Adrenal gland (tissue), 19 donors: ENCODE measurements at regions of chr17 and their contacts with region 1.

Region 1: DNA sequence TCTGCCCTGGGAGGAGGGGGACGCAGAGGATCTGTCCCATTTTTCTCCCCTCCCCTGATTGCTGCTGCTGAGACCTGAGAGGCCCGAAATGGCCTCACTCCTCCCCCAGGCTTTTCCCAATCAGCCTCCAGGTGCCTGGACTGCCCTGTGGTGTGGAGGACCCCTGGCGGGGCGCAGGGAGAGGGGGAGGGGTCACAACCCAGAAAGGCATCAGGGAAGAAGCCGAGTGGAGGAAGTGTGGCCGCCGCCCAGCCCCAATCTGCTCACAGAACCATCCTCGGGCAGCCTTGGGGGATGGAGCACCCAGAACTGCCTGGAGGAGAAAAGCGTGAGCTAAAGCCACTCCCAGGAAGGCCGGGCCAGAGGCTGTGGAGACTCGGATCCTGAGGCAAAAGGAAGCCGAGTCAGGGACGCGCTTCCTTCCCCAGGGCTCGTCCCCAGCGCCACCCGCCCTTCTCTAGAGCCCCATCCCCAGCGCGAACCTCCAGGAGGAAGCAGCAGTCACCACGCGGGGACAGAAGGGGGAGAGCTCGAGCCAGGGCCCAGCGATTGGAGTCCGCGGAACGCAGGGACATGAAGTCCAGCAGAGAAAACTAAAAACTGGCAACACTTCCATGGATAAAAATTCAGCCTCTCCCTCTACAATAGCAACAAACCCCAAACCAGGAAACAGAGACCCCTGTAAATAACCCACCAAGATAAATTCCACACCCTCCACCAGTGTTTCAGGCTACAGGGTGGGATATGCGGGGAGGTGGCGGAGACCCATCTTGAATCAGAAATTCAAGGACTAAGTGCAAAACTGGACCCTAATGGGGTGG is 116.3 kb upstream of the METRNL start:
- DNase-seq: peak; percentile 61 to 88 (median 76)
- H3K4me3 ChIP-seq: no peak overlapping the region
- H3K27ac ChIP-seq: peak overlapping the region in 2 of 5 donors; percentile 50 to 63
- H3K4me1 ChIP-seq: peaks cover 0 to 4% of the 10 kb centered on the region in 2 donors
- H3K27me3 ChIP-seq: no peaks in the 10 kb centered on the region
- CTCF ChIP-seq: peak; percentile 18 to 79 (median 68)
- POLR2A ChIP-seq: no peak

Region 2: DNA sequence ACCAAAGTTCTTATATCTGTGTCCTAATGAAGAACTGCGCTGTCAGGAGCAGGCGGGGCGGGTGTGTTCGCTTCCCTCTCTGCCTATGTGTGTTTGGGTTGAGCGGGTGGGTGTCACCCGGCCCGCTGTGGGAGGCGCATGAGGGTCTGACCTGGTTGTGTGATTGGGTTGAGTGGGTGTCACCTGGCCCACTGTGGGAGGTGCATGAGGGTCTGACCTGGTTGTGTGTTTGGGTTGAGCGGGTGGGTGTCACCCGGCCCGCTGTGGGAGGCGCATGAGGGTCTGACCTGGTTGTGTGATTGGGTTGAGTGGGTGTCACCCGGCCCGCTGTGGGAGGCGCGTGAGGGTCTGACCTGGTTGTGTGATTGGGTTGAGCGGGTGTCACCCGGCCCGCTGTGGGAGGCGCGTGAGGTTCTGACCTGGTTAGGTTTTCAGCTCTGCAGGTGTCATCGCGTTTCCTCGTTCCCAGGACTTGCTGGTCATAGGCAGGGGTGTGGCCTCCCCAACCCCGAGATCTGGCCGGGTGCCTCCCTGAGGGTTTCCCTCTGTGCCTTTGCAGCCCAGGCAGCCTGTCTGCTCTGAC is 53.7 kb before region 1 on chr17:
- intact Hi-C with region 1: loop called in 1 of 2 experiments (anchors 10 kb)
- DNase-seq: no peak
- H3K4me3 ChIP-seq: no peak overlapping the region
- H3K27ac ChIP-seq: no peak overlapping the region
- H3K4me1 ChIP-seq: no peaks in the 10 kb centered on the region
- H3K27me3 ChIP-seq: no peaks in the 10 kb centered on the region
- CTCF ChIP-seq: no peak
- POLR2A ChIP-seq: no peak

Region 3: DNA sequence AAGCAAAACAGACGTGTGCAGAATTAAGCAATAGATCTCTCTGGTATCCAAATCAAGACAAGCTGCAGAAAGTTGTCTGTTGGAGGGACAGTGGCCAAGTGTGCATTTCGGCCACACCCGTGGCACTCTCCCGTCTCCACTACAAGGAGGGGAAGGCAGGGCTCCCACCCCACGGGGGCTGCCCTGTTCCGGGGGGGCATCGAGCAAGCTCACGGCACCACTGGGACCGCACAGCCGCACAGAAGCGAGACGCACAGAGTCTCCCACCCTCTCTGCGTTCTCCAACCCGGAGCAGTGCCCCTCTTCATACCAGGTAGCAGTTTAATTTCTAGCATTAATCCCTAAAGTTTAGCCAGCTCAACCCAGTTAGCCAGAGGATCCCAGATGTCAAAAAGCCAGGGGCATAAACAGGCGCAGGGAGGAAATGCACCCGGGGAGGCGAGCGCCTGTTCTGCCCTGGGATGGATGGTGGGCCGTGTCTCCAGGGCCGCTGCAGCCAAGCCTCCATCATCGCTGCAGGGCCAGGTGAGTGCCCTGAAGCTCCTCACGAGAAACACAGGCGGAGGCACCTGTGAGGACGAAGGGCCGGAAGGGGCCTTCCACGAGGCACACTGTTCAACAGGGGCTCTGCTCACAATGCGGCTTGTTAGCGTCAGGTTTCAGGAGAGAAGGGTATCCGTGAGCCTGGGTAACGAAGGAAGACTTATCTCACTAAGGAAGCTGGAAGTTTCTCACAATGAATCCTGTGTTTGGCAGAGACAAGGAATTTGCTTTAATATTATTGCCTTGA is 74.2 kb after region 1 on chr17:
- intact Hi-C with region 1: no loop called
- DNase-seq: peak in 1 of 7 donors; percentile 30
- H3K4me3 ChIP-seq: no peak overlapping the region
- H3K27ac ChIP-seq: no peak overlapping the region
- H3K4me1 ChIP-seq: no peaks in the 10 kb centered on the region
- H3K27me3 ChIP-seq: no peaks in the 10 kb centered on the region
- CTCF ChIP-seq: no peak
- POLR2A ChIP-seq: no peak